Activated CD4-positive, alpha-beta T cell treated with anti-CD3 and anti-CD28 coated beads, Interleukin-2, amount 10 ng/mL, durations not matched to agents 24 days and 14 days (primary cell): ENCODE measurements at regions of chr2 and their contacts with region 1.

Region 1: GRCh38 chr2:158753641-158754611 is 41.2 kb upstream of the DAPL1 start:
- DNase-seq: peak; percentile 77
- H3K4me3 Mint-ChIP-seq: no peak overlapping the region
- H3K27ac Mint-ChIP-seq: no peak overlapping the region
- H3K4me1 Mint-ChIP-seq: no peaks in the 10 kb centered on the region
- H3K27me3 Mint-ChIP-seq: peaks cover 8% of the 10 kb centered on the region

Region 2: DNA sequence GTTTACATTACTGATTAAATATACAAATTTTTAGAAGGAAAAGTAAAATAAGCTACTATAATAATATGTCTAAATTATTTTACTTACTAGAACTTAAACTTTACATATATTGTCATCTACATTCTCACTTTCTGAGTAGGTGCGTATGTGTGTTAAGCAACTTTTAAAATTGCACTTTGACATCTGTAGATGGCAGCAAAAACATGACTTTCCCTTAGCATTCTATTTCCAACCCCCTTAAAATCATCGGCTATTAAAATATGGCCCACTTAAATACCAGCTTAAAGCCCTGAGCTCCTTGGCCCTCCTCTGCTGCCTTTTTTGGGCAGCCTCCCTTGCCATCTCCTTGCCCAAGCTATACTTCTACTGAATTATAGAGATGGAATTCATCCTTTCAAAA is 574.3 kb before region 1 on chr2:
- intact Hi-C with region 1: loop called (anchors 2 kb)
- DNase-seq: no peak
- H3K4me3 Mint-ChIP-seq: no peak overlapping the region
- H3K27ac Mint-ChIP-seq: no peak overlapping the region
- H3K4me1 Mint-ChIP-seq: no peaks in the 10 kb centered on the region
- H3K27me3 Mint-ChIP-seq: peaks cover 47% of the 10 kb centered on the region

Region 3: GRCh38 chr2:158773121-158773520 is 19.2 kb after region 1 on chr2:
- intact Hi-C with region 1: no loop called
- DNase-seq: no peak
- H3K4me3 Mint-ChIP-seq: no peak overlapping the region
- H3K27ac Mint-ChIP-seq: no peak overlapping the region
- H3K4me1 Mint-ChIP-seq: no peaks in the 10 kb centered on the region
- H3K27me3 Mint-ChIP-seq: peaks cover 4% of the 10 kb centered on the region